PC-9 (cell line): ENCODE measurements at regions of chr15 and their contacts with region 1.

Region 1: GRCh38 chr15:74635228-74635627 is 19.6 kb downstream of the CLK3 start:
- DNase-seq: peak in 1 of 2 experiments; percentile 58
- H3K4me3 ChIP-seq: no peak overlapping the region
- H3K27ac ChIP-seq: no peak overlapping the region
- H3K4me1 ChIP-seq: no peaks in the 10 kb centered on the region
- H3K27me3 ChIP-seq: no peaks in the 10 kb centered on the region
- CTCF ChIP-seq: peak; percentile 94

Region 2: GRCh38 chr15:74422650-74423430 is 212.4 kb before region 1 on chr15:
- CTCF ChIA-PET with region 1: no interaction called
- POLR2A ChIA-PET with region 1: no interaction called
- intact Hi-C with region 1: no loop called
- DNase-seq: peak; percentile 93 to 96
- H3K4me3 ChIP-seq: no peak overlapping the region
- H3K27ac ChIP-seq: peak overlapping the region; percentile 80
- H3K4me1 ChIP-seq: peaks cover 65% of the 10 kb centered on the region
- H3K27me3 ChIP-seq: no peaks in the 10 kb centered on the region
- CTCF ChIP-seq: no peak

Region 3: GRCh38 chr15:74438721-74439316 is 196.4 kb before region 1 on chr15:
- CTCF ChIA-PET with region 1: no interaction called
- POLR2A ChIA-PET with region 1: no interaction called
- intact Hi-C with region 1: loop called (anchors 1 kb)
- DNase-seq: peak; percentile 66 to 78
- H3K4me3 ChIP-seq: no peak overlapping the region
- H3K27ac ChIP-seq: no peak overlapping the region
- H3K4me1 ChIP-seq: 0 out of 2 replicates have a peak, but pooled peaks cover 6% of the 10 kb centered on the region
- H3K27me3 ChIP-seq: no peaks in the 10 kb centered on the region
- CTCF ChIP-seq: peak; percentile 87

Region 4: DNA sequence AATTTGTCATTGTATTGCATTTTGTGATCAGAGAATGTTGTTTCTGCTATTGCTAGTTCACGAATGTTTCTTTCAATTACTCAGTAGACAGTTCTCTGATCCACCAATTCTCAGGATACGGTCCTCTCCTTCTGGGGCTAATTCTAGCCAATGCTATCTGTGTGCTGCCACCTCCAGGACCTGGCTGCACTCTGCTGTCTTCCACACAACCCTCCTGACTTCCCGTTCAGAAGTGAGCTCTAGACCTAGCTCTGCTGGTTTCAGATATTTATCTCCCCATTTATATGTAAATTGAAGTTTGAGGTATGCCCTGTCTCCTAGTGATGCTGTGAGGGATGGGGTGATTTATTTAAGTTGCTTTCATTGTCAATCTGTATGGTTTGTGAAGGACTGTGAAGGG is 152.6 kb before region 1 on chr15:
- CTCF ChIA-PET with region 1: interaction called, 15 read pairs
- POLR2A ChIA-PET with region 1: no interaction called
- intact Hi-C with region 1: no loop called
- DNase-seq: no peak
- H3K4me3 ChIP-seq: no peak overlapping the region
- H3K27ac ChIP-seq: no peak overlapping the region
- H3K4me1 ChIP-seq: no peaks in the 10 kb centered on the region
- H3K27me3 ChIP-seq: no peaks in the 10 kb centered on the region
- CTCF ChIP-seq: no peak

Region 5: DNA sequence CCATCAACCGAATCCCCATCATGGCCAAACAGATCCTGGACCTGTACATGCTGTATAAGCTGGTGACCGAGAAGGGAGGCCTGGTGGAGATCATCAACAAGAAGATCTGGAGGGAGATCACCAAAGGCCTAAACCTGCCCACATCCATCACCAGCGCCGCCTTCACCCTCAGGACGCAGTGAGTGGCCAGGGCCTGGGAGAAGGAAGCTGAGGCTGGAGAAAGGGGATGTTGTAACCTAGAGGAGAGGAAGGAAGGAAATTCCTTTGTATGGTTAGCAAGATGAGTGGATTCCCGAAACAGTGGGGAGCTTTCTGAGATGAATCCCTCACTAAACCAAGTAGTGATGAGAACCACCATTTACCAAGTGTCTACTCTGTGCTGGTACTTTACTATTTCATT is 45.4 kb before region 1 on chr15:
- CTCF ChIA-PET with region 1: no interaction called
- POLR2A ChIA-PET with region 1: no interaction called
- intact Hi-C with region 1: no loop called
- DNase-seq: no peak
- H3K4me3 ChIP-seq: no peak overlapping the region
- H3K27ac ChIP-seq: no peak overlapping the region
- H3K4me1 ChIP-seq: peaks cover 14% of the 10 kb centered on the region
- H3K27me3 ChIP-seq: no peaks in the 10 kb centered on the region
- CTCF ChIP-seq: no peak

Region 6: GRCh38 chr15:74680456-74680855 is 45.2 kb after region 1 on chr15:
- CTCF ChIA-PET with region 1: interaction called, 11 read pairs
- POLR2A ChIA-PET with region 1: no interaction called
- intact Hi-C with region 1: no loop called
- DNase-seq: no peak
- H3K4me3 ChIP-seq: no peak overlapping the region
- H3K27ac ChIP-seq: no peak overlapping the region
- H3K4me1 ChIP-seq: no peaks in the 10 kb centered on the region
- H3K27me3 ChIP-seq: no peaks in the 10 kb centered on the region
- CTCF ChIP-seq: no peak

Region 7: GRCh38 chr15:74695597-74696397 is 60.6 kb after region 1 on chr15 and contains the start of gene EDC3:
- CTCF ChIA-PET with region 1: no interaction called
- POLR2A ChIA-PET with region 1: no interaction called
- intact Hi-C with region 1: no loop called
- DNase-seq: peak; percentile 72 to 76
- H3K4me3 ChIP-seq: peak within 1 kb of the TSS; percentile 83
- H3K27ac ChIP-seq: peak within 1 kb of the TSS; percentile 45
- H3K4me1 ChIP-seq: peaks cover 10% of the 10 kb centered on the region
- H3K27me3 ChIP-seq: no peaks in the 10 kb centered on the region
- CTCF ChIP-seq: no peak
- total RNA-seq, gene EDC3: 43.3 and 46.3 TPM in 2 replicates

Region 8: DNA sequence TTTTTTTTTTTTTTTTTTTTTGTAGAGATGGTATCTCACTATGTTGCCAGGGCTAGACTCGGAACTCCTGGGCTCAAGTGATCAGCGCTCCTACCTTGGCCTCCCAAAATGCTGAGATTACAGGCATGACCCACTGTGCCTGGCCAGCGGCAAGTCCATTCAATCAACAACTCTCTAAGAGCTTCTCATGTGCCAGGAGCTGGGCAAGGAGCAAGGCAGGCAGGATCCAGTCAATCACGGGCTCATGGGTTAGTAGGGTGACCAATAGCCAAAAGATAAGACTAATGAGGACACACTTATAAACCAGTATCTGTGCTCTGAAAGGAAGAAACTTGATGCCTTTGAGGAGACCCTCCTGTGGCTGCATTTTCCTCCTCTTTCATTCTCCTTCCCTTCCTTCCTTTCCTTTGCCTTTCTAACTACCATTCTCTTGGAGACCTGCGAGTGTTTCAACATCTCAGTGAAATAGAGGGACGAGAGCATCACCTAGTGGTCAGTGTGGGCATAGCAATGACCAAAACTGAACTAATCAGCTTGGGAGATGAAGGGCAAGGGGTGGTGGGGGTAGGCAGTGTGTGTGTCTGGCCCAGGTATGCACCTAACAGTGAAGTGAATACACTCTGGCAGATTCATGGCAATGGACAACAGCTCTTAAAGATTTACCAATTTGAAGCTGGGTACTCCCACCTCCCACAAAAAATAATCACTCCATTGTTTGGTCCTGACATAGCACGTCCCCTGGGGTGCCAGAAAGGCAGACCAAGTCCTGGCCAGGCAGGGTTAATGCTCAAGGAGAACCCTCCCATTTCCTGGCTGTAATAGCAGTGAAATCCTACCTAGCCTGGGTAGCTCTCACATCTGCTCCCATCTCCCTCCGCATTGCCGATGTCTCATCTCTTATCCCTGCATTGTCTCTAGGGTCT is 315.1 kb after region 1 on chr15:
- CTCF ChIA-PET with region 1: no interaction called
- POLR2A ChIA-PET with region 1: no interaction called
- intact Hi-C with region 1: loop called (anchors 2 kb)
- DNase-seq: peak; percentile 67 to 75
- H3K4me3 ChIP-seq: no peak overlapping the region
- H3K27ac ChIP-seq: no peak overlapping the region
- H3K4me1 ChIP-seq: peaks cover 23% of the 10 kb centered on the region
- H3K27me3 ChIP-seq: no peaks in the 10 kb centered on the region
- CTCF ChIP-seq: peak; percentile 99